ENCODE measurements at regions of chr5 and their contacts with region 1.

Region 1: GRCh38 chr5:170100066-170100943 is 5.4 kb upstream of the FOXI1 start:
- DNase-seq: peak; percentile 88
- H3K4me3 Mint-ChIP-seq: no peak overlapping the region
- H3K27ac Mint-ChIP-seq: no peak overlapping the region
- H3K4me1 Mint-ChIP-seq: no peaks in the 10 kb centered on the region
- H3K27me3 Mint-ChIP-seq: peaks cover 2% of the 10 kb centered on the region

Region 2: DNA sequence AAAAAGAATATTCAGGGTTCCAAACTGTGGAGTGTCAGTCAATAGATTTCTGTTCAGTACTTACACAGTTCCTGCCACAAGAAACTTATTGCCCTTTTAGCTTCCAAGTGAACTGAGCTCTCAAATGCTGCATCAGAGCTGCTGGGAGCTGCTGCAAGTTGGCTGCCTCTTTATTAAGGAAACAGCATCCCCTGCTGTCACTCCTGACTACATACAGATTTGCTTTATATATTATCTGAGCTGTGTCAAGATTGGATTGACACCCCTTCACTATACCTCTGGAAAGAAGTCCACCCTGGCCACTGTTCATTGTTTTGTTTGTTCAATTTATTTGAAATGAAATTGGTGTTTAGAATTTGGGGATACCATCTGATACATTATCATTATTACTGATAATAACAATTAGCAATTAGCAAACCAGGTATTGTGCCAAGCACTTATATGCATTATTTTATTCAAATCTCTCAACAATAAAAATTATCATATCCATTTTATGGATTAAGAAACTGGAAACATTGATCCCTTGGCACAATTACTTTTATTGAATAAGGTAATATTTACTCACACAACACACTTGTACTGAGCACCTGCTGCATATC is 116.1 kb after region 1 on chr5:
- CTCF ChIA-PET with region 1: interaction called, 11 read pairs
- intact Hi-C with region 1: loop called (anchors 1 kb)
- DNase-seq: peak; percentile 33
- H3K4me3 Mint-ChIP-seq: no peak overlapping the region
- H3K27ac Mint-ChIP-seq: no peak overlapping the region
- H3K4me1 Mint-ChIP-seq: no peaks in the 10 kb centered on the region
- H3K27me3 Mint-ChIP-seq: no peaks in the 10 kb centered on the region

Region 3: GRCh38 chr5:170420780-170421412 is 320.6 kb after region 1 on chr5:
- CTCF ChIA-PET with region 1: interaction called, 5 read pairs
- intact Hi-C with region 1: loop called (anchors 1 kb)
- DNase-seq: peak; percentile 71
- H3K4me3 Mint-ChIP-seq: no peak overlapping the region
- H3K27ac Mint-ChIP-seq: no peak overlapping the region
- H3K4me1 Mint-ChIP-seq: peaks cover 15% of the 10 kb centered on the region
- H3K27me3 Mint-ChIP-seq: no peaks in the 10 kb centered on the region

Measured in activated naive CD4-positive, alpha-beta T cell treated with anti-CD3 and anti-CD28 coated beads for 36 hours (primary cell).